Thyroid gland (tissue), 4 donors: ENCODE measurements at regions of chr5 and their contacts with region 1.

Region 1: GRCh38 chr5:113320273-113320780 is 114.5 kb downstream of the TSSK1B start:
- DNase-seq: no peak
- H3K4me3 ChIP-seq: no peak overlapping the region
- H3K27ac ChIP-seq: no peak overlapping the region
- H3K4me1 ChIP-seq: no peaks in the 10 kb centered on the region
- H3K27me3 ChIP-seq: no peaks in the 10 kb centered on the region
- CTCF ChIP-seq: no peak
- POLR2A ChIP-seq: no peak

Region 2: GRCh38 chr5:113050721-113051382 is 269.5 kb before region 1 on chr5:
- intact Hi-C with region 1: loop called (anchors 10 kb)
- DNase-seq: no peak
- H3K4me3 ChIP-seq: no peak overlapping the region
- H3K27ac ChIP-seq: peak overlapping the region in 1 of 3 donors; percentile 41
- H3K4me1 ChIP-seq: peaks cover 0 to 8% of the 10 kb centered on the region in 2 donors
- H3K27me3 ChIP-seq: no peaks in the 10 kb centered on the region
- CTCF ChIP-seq: no peak
- POLR2A ChIP-seq: no peak

Region 3: GRCh38 chr5:113179156-113179555 is 141.2 kb before region 1 on chr5:
- intact Hi-C with region 1: no loop called
- DNase-seq: no peak
- H3K4me3 ChIP-seq: no peak overlapping the region
- H3K27ac ChIP-seq: no peak overlapping the region
- H3K4me1 ChIP-seq: peaks cover 0 to 6% of the 10 kb centered on the region in 2 donors
- H3K27me3 ChIP-seq: no peaks in the 10 kb centered on the region
- CTCF ChIP-seq: no peak
- POLR2A ChIP-seq: no peak